CD4-positive, alpha-beta T cell (primary cell): ENCODE measurements at regions of chr10 and their contacts with region 1.

Region 1: GRCh38 chr10:119207367-119207668 is at the start of gene GRK5:
- DNase-seq: peak; percentile 89 to 99 (median 96)
- ATAC-seq: peak; percentile 82
- H3K4me3 ChIP-seq: peak within 1 kb of the TSS; percentile 68
- H3K4me3 Mint-ChIP-seq: peak within 1 kb of the TSS; percentile 99
- H3K27ac ChIP-seq: peak within 1 kb of the TSS; percentile 70 to 88
- H3K27ac Mint-ChIP-seq: peak within 1 kb of the TSS; percentile 89
- H3K4me1 ChIP-seq: peaks cover 40% of the 10 kb centered on the region
- H3K4me1 Mint-ChIP-seq: peaks cover 46% of the 10 kb centered on the region
- H3K27me3 ChIP-seq: no peaks in the 10 kb centered on the region
- H3K27me3 Mint-ChIP-seq: no peaks in the 10 kb centered on the region
- CTCF ChIP-seq: no peak
- total RNA-seq, gene GRK5: 19.2 to 20.8 TPM

Region 2: GRCh38 chr10:118204292-118204943 is 1002.9 kb before region 1 on chr10:
- CTCF ChIA-PET with region 1: no interaction called
- POLR2A ChIA-PET with region 1: no interaction called
- intact Hi-C with region 1: no loop called
- DNase-seq: no peak
- ATAC-seq: no peak
- H3K4me3 ChIP-seq: no peak overlapping the region
- H3K4me3 Mint-ChIP-seq: no peak overlapping the region
- H3K27ac ChIP-seq: no peak overlapping the region
- H3K27ac Mint-ChIP-seq: no peak overlapping the region
- H3K4me1 ChIP-seq: no peaks in the 10 kb centered on the region
- H3K4me1 Mint-ChIP-seq: no peaks in the 10 kb centered on the region
- H3K27me3 ChIP-seq: peaks cover 3 to 27% of the 10 kb centered on the region in 2 experiments
- H3K27me3 Mint-ChIP-seq: peaks cover 58% of the 10 kb centered on the region
- CTCF ChIP-seq: no peak

Region 3: DNA sequence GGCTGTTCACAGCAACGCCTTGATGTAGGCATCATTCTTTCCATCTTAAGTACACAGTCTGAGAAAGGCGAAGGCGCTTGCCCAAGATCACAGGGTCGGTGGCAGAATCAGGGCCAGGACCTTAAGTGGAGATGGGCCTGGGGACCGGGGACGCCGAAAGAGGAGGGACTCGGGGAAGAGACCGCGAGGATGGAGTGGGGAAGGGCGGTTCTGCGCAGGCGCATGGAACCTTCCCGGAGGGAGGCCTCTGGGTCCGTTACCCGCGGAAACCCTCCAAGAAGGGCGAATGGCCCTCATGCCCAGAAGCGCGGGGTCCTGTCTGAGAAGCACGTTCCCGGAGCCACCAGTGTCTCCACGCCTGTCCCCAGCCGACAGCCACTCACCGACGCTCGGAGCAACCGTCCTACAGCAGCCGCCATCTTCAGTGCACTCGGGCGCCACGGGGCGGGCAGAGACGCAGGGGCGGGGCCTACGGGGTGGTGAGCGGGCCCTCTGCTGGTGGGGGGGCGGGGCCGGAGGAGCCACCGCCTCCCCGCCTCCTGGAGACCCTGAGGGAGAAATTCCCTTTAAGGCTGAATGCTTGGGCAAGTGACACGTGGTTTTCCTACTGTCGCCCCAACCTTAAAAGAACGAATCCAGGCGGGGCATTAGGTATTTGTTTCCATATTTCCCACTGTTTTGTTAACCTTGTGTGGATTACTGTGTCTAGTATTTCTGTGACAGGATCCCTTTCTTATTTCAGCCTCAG is 28.8 kb before region 1 on chr10 and contains the start of gene PRDX3:
- CTCF ChIA-PET with region 1: interaction called, 7 read pairs
- POLR2A ChIA-PET with region 1: no interaction called
- intact Hi-C with region 1: loop called (anchors 2 kb)
- DNase-seq: peak; percentile 85 to 96 (median 91)
- ATAC-seq: peak; percentile 97
- H3K4me3 ChIP-seq: peak within 1 kb of the TSS; percentile 93
- H3K4me3 Mint-ChIP-seq: peak within 1 kb of the TSS; percentile 98
- H3K27ac ChIP-seq: peak within 1 kb of the TSS; percentile 71 to 80
- H3K27ac Mint-ChIP-seq: peak within 1 kb of the TSS; percentile 95
- H3K4me1 ChIP-seq: peaks cover 32% of the 10 kb centered on the region
- H3K4me1 Mint-ChIP-seq: peaks cover 35% of the 10 kb centered on the region
- H3K27me3 ChIP-seq: no peaks in the 10 kb centered on the region
- H3K27me3 Mint-ChIP-seq: no peaks in the 10 kb centered on the region
- CTCF ChIP-seq: peak; percentile 19
- total RNA-seq, gene PRDX3: 7.1 to 7.5 TPM

Region 4: GRCh38 chr10:119270762-119271366 is 63.5 kb after region 1 on chr10:
- CTCF ChIA-PET with region 1: interaction called, 25 read pairs
- POLR2A ChIA-PET with region 1: interaction called, 29 read pairs
- intact Hi-C with region 1: loop called (anchors 1 to 5 kb)
- DNase-seq: peak; percentile 12 to 76 (median 42)
- ATAC-seq: no peak
- H3K4me3 ChIP-seq: peak overlapping the region; percentile 44
- H3K4me3 Mint-ChIP-seq: peak overlapping the region; percentile 74
- H3K27ac ChIP-seq: peak overlapping the region in 1 of 2 donors; percentile 20
- H3K27ac Mint-ChIP-seq: peak overlapping the region; percentile 96
- H3K4me1 ChIP-seq: peaks cover 65% of the 10 kb centered on the region
- H3K4me1 Mint-ChIP-seq: peaks cover 69% of the 10 kb centered on the region
- H3K27me3 ChIP-seq: no peaks in the 10 kb centered on the region
- H3K27me3 Mint-ChIP-seq: no peaks in the 10 kb centered on the region
- CTCF ChIP-seq: no peak

Region 5: GRCh38 chr10:119348516-119349240 is 141.4 kb after region 1 on chr10:
- CTCF ChIA-PET with region 1: no interaction called
- POLR2A ChIA-PET with region 1: no interaction called
- intact Hi-C with region 1: no loop called
- DNase-seq: no peak
- ATAC-seq: no peak
- H3K4me3 ChIP-seq: no peak overlapping the region
- H3K4me3 Mint-ChIP-seq: no peak overlapping the region
- H3K27ac ChIP-seq: no peak overlapping the region
- H3K27ac Mint-ChIP-seq: no peak overlapping the region
- H3K4me1 ChIP-seq: peaks cover 4% of the 10 kb centered on the region
- H3K4me1 Mint-ChIP-seq: peaks cover 14% of the 10 kb centered on the region
- H3K27me3 ChIP-seq: no peaks in the 10 kb centered on the region
- H3K27me3 Mint-ChIP-seq: no peaks in the 10 kb centered on the region
- CTCF ChIP-seq: no peak

Region 6: DNA sequence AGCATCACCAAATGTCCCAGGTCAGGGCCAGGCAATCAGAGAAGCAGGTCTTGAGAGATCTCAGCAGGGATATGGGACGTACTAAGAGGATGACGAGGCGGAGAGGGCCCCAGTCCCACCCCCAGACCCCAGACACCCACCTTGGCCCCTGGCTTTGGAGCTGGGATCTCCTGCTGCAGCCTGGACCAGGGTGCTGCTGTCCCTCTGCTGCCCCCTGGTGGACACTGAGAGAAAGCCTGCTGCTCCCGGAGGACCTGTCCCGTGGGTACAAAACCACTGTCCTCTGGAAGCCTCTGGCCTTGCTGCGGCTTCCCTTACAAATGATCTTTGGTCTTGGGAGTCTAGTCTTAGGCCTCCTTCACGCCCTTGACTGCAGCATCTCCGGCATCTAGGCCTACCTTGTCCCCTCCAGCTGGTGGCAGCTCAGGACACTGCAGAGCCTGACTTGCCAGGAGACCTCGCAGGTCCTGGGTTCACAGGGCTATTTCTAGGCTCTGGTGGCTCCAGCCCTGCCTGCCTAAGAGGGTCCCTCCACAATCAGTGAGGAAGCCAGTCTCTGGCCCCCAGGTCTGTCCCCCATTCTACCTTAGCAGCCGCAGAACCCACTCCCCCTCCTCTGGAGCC is 238.1 kb after region 1 on chr10:
- CTCF ChIA-PET with region 1: interaction called, 46 read pairs
- POLR2A ChIA-PET with region 1: interaction called, 11 read pairs
- intact Hi-C with region 1: loop called in 1 of 2 experiments (anchors 1 kb)
- DNase-seq: peak; percentile 75 to 93 (median 82)
- ATAC-seq: peak; percentile 90
- H3K4me3 ChIP-seq: no peak overlapping the region
- H3K4me3 Mint-ChIP-seq: no peak overlapping the region
- H3K27ac ChIP-seq: no peak overlapping the region
- H3K27ac Mint-ChIP-seq: no peak overlapping the region
- H3K4me1 ChIP-seq: peaks cover 9% of the 10 kb centered on the region
- H3K4me1 Mint-ChIP-seq: peaks cover 20% of the 10 kb centered on the region
- H3K27me3 ChIP-seq: no peaks in the 10 kb centered on the region
- H3K27me3 Mint-ChIP-seq: no peaks in the 10 kb centered on the region
- CTCF ChIP-seq: peak; percentile 83

Region 7: GRCh38 chr10:119596537-119597404 is 389.5 kb after region 1 on chr10 and contains the start of gene TIAL1:
- CTCF ChIA-PET with region 1: no interaction called
- POLR2A ChIA-PET with region 1: interaction called, 3 read pairs
- intact Hi-C with region 1: loop called (anchors 5 kb)
- DNase-seq: peak; percentile 82 to 97 (median 90)
- ATAC-seq: peak; percentile 82
- H3K4me3 ChIP-seq: peak within 1 kb of the TSS; percentile 70
- H3K4me3 Mint-ChIP-seq: peak within 1 kb of the TSS; percentile 98
- H3K27ac ChIP-seq: peak within 1 kb of the TSS; percentile 87 to 96
- H3K27ac Mint-ChIP-seq: peak within 1 kb of the TSS; percentile 95
- H3K4me1 ChIP-seq: peaks cover 22% of the 10 kb centered on the region
- H3K4me1 Mint-ChIP-seq: peaks cover 60% of the 10 kb centered on the region
- H3K27me3 ChIP-seq: no peaks in the 10 kb centered on the region
- H3K27me3 Mint-ChIP-seq: no peaks in the 10 kb centered on the region
- CTCF ChIP-seq: no peak
- total RNA-seq, gene TIAL1: 159 to 174 TPM

Region 8: GRCh38 chr10:119872860-119873681 is 665.8 kb after region 1 on chr10:
- CTCF ChIA-PET with region 1: no interaction called
- POLR2A ChIA-PET with region 1: interaction called, 14 read pairs
- intact Hi-C with region 1: no loop called
- DNase-seq: peak; percentile 78 to 96 (median 86)
- ATAC-seq: peak; percentile 90
- H3K4me3 ChIP-seq: peak overlapping the region; percentile 80
- H3K4me3 Mint-ChIP-seq: peak overlapping the region; percentile 93
- H3K27ac ChIP-seq: peak overlapping the region; percentile 78 to 87
- H3K27ac Mint-ChIP-seq: peak overlapping the region; percentile 94
- H3K4me1 ChIP-seq: peaks cover 37% of the 10 kb centered on the region
- H3K4me1 Mint-ChIP-seq: peaks cover 35% of the 10 kb centered on the region
- H3K27me3 ChIP-seq: no peaks in the 10 kb centered on the region
- H3K27me3 Mint-ChIP-seq: no peaks in the 10 kb centered on the region
- CTCF ChIP-seq: no peak